ENCODE measurements at regions of chr17 and their contacts with region 1.

Region 1: GRCh38 chr17:67689534-67690177 is 28.1 kb upstream of the NOL11 start:
- DNase-seq: peak in 1 of 2 donors; percentile 38
- H3K4me3 ChIP-seq: no peak overlapping the region
- H3K27ac ChIP-seq: no peak overlapping the region
- H3K4me1 ChIP-seq: no peaks in the 10 kb centered on the region
- H3K27me3 ChIP-seq: no peaks in the 10 kb centered on the region
- CTCF ChIP-seq: peak; percentile 81 to 87 (median 85)
- POLR2A ChIP-seq: no peak

Region 2: DNA sequence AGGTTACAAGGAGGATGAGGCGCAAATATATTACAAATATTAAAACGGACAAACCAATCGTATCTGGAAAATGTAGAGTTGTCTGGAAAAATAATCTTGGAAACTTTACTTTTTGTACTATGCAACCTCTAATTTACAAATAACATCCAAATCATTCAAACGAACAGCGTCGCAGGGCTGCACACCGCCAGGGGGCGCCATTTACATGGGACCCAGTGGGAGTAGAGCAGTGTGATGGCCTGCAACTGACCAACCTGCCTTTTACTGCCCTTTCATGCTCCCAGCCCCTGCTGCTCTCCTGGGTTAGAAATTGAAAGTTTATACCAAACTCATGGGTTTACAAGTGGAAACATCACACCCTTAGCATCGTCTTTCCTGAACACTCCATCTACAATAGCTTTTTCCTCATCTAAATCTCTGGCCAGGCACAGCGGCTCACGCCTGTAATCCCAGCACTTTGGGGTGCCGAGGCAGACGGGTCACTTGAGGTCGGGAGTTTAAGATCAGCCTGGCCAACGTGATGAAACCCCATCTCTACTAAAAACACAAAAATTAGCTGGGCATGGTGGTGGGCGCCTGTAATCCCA is 302.6 kb before region 1 on chr17:
- intact Hi-C with region 1: loop called (anchors 10 kb)
- DNase-seq: no peak
- H3K4me3 ChIP-seq: no peak overlapping the region
- H3K27ac ChIP-seq: no peak overlapping the region
- H3K4me1 ChIP-seq: no peaks in the 10 kb centered on the region
- H3K27me3 ChIP-seq: no peaks in the 10 kb centered on the region
- CTCF ChIP-seq: peak in 1 of 3 donors; percentile 29
- POLR2A ChIP-seq: no peak

Measured in breast epithelium (tissue), 4 donors.